Dendritic cell treated with granulocyte-macrophage colony-stimulating factor and Interleukin-4, amounts not matched to agents 40 ng/mL and 50 ng/mL, for 4 days (primary cell): ENCODE measurements at regions of chr3 and their contacts with region 1.

Region 1: GRCh38 chr3:69542221-69543079 is 156.6 kb upstream of the FRMD4B start:
- H3K4me3 Mint-ChIP-seq: peak overlapping the region; percentile 98
- H3K27ac Mint-ChIP-seq: peak overlapping the region; percentile 95
- H3K4me1 Mint-ChIP-seq: peaks cover 53% of the 10 kb centered on the region
- H3K27me3 Mint-ChIP-seq: peaks cover 4% of the 10 kb centered on the region

Region 2: DNA sequence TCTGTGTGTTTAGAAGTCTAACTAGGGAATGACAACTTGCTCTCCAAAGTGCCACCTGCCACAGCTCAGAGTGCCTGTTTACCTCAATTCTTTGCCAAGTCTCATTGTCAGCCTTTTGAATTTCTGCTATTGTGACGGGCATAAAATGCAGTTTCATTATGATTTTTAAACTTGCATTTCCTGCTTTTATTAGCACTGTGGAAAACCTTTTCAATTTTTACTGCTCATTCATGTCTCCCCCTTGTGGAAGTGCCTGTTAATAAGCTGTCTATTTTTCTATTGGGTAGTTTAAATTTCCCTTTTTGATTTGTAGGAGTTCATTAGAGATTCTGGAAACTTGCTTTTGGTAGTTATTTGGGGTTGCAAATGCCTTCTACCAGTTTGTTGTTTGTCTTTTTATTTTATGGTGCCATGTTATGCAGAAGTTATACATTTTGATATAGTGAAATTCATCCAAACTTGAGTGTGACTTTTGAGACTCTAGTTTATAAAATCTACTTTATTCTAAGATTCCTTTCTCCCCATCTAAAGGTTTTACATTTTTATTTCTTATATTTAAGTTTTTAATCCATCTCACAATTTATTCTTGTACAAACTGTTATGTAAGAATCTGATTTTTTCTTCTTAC is 102.7 kb before region 1 on chr3:
- intact Hi-C with region 1: loop called (anchors 5 kb)
- H3K4me3 Mint-ChIP-seq: peak overlapping the region; percentile 23
- H3K27ac Mint-ChIP-seq: peak overlapping the region; percentile 67
- H3K4me1 Mint-ChIP-seq: peaks cover 44% of the 10 kb centered on the region
- H3K27me3 Mint-ChIP-seq: no peaks in the 10 kb centered on the region

Region 3: DNA sequence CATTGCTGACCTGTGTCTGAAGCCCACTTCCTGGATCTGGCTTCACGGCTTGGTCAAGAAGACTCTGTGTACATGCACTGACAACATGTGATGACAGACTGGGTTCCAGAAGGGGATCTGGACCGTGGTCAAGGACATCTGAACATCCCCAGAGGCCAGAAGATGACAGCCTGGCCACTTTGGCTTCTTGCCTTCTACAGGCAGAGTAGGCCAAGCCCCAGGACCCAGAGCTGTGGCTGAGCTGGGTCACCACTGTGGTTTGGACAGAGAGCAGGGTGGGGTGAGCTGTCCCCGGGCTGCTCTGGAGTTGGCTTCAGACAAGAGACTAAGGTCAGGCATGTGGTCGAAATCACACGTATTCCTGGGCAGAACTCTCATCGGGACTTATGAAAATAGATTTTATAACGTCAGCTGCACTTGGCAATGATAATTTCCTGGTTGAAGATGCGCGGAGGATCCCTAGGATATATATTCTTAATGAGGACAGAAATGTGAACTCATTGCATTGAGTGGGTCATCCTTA is 42.5 kb before region 1 on chr3:
- intact Hi-C with region 1: loop called (anchors 5 kb)
- H3K4me3 Mint-ChIP-seq: peak overlapping the region; percentile 17
- H3K27ac Mint-ChIP-seq: peak overlapping the region; percentile 87
- H3K4me1 Mint-ChIP-seq: peaks cover 59% of the 10 kb centered on the region
- H3K27me3 Mint-ChIP-seq: no peaks in the 10 kb centered on the region

Region 4: GRCh38 chr3:69888040-69888942 is 345.8 kb after region 1 on chr3:
- intact Hi-C with region 1: no loop called
- H3K4me3 Mint-ChIP-seq: no peak overlapping the region
- H3K27ac Mint-ChIP-seq: no peak overlapping the region
- H3K4me1 Mint-ChIP-seq: no peaks in the 10 kb centered on the region
- H3K27me3 Mint-ChIP-seq: no peaks in the 10 kb centered on the region